Left cardiac atrium (tissue), 4 donors: ENCODE measurements at regions of chr13 and their contacts with region 1.

Region 1: GRCh38 chr13:52450012-52450792 is at the start of gene VPS36:
- DNase-seq: peak; percentile 97
- ATAC-seq: peak; percentile 92 to 95
- total RNA-seq, gene VPS36: 34.1 to 38.5 TPM

Region 2: DNA sequence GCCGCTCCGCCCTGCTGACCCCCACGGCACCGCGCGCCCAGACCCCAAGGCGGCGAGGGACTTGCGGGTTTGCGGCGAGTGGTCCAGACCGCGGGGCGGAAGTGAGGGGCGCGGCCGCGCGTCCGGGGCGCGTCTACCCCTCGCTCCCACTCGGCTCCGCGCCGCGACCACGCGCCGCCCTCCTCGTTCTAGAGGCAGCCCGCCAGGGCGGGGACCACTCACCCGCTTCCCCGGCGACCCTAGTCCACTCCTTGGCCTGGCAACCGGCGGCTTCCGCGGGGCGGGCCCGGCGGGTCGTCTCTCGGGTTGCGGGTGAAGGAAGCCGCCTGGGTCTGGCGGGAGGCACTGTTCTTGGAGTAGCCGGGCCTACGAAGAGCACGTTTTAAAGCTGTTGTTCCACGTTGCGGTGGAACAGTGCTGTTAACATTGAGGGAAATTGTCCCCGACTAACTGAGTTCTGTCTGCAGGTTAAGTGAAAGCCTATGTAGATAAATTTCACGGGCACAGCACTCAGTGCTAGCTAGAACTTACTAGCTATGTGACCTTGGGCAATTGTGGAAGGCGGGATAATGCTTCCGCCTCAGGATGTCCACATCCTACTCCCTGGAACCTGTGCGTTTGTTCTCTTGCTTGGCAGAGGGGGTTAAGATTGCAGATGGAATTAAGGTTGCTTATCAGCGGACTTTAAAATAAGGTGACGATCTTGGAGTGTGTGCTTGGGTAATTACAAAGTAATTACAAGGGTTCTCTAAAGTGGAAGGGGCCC is 290.7 kb before region 1 on chr13 and contains the start of gene NEK3:
- intact Hi-C with region 1: no loop called
- DNase-seq: peak; percentile 81
- ATAC-seq: peak; percentile 94 to 96
- total RNA-seq, gene NEK3: 9.2 to 11.9 TPM

Region 3: DNA sequence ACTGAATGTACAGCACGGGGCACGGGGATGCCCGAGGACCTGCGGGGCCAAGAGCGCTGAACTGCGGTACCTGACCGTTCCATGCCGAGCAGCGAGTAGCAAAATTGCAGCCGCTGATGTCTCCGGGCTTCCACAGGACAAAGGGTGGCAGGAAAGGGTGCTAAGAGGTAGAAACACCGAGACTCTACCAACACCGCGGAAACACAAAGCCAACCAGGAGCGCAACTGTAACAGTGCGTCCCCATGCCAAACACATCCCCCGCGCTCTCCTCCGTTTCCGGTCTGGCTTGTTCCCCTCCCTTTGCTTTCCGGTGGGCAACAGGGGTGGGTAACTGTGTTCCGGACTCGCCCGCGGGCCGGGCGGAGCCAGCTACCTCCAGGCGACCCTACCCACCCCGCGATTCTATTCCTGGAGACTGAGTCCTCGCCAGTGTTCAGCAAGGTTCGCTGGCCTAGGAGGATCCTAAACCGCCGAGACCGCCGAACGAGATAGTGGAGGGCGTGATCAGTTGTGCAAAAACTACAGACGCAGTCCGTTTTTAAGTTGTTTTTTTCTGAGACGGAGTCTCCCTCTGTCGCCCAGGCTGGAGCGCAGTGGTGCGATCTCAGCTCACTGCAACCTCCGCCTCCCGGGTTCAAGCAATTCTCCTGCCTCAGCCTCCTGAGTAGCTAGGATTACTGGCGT is 255.9 kb before region 1 on chr13:
- intact Hi-C with region 1: loop called in 1 of 2 experiments (anchors 10 kb)
- DNase-seq: peak; percentile 85
- ATAC-seq: peak; percentile 92 to 93

Region 4: GRCh38 chr13:52348983-52349780 is 101.0 kb before region 1 on chr13:
- intact Hi-C with region 1: loop called in 1 of 2 experiments (anchors 5 kb)
- DNase-seq: no peak
- ATAC-seq: peak in 1 of 2 donors; percentile 45

Region 5: DNA sequence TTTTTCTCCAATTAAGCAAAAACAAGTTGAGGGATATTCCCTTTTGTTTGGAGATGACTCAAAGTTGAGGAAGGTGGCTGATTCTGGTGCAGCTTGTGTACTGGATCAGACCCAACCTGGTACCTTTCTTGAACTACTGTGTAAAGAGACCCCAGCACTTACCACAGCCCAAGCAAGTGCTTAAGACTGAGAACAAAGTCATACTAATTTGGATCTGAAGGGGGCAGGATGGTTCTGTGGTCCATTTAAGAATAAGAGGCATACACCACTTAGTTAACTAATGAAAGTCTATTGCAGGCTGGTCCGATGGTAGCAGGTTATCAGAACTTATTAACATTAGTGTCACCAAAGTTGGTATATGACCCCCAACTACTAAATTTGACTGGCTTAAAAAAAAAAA is 50.5 kb before region 1 on chr13:
- intact Hi-C with region 1: loop called (anchors 5 to 10 kb)
- DNase-seq: no peak
- ATAC-seq: peak; percentile 21 to 41